ENCODE measurements at regions of chr5 and their contacts with region 1.

Region 1: GRCh38 chr5:81751009-81751835 is at the start of gene SSBP2:
- DNase-seq: peak; percentile 99
- ATAC-seq: peak; percentile 91
- H3K4me3 Mint-ChIP-seq: peak within 1 kb of the TSS; percentile 87
- H3K27ac Mint-ChIP-seq: peak within 1 kb of the TSS; percentile 91
- H3K4me1 Mint-ChIP-seq: peaks cover 22% of the 10 kb centered on the region
- H3K27me3 Mint-ChIP-seq: peaks cover 24% of the 10 kb centered on the region
- total RNA-seq, gene SSBP2: 24.3 to 26.7 TPM

Region 2: GRCh38 chr5:81134066-81134465 is 617.2 kb before region 1 on chr5:
- CTCF ChIA-PET with region 1: no interaction called
- POLR2A ChIA-PET with region 1: no interaction called
- DNase-seq: no peak
- ATAC-seq: no peak
- H3K4me3 Mint-ChIP-seq: no peak overlapping the region
- H3K27ac Mint-ChIP-seq: no peak overlapping the region
- H3K4me1 Mint-ChIP-seq: no peaks in the 10 kb centered on the region
- H3K27me3 Mint-ChIP-seq: no peaks in the 10 kb centered on the region

Region 3: GRCh38 chr5:81779125-81779915 is 28.1 kb after region 1 on chr5:
- CTCF ChIA-PET with region 1: interaction called, 5 read pairs
- POLR2A ChIA-PET with region 1: interaction called, 15 read pairs
- DNase-seq: peak; percentile 57
- ATAC-seq: peak; percentile 94
- H3K4me3 Mint-ChIP-seq: peak overlapping the region; percentile 74
- H3K27ac Mint-ChIP-seq: peak overlapping the region; percentile 85
- H3K4me1 Mint-ChIP-seq: peaks cover 25% of the 10 kb centered on the region
- H3K27me3 Mint-ChIP-seq: no peaks in the 10 kb centered on the region

Region 4: GRCh38 chr5:81838307-81838906 is 87.2 kb after region 1 on chr5:
- CTCF ChIA-PET with region 1: interaction called, 24 read pairs
- POLR2A ChIA-PET with region 1: interaction called, 3 read pairs
- DNase-seq: peak; percentile 38
- ATAC-seq: peak; percentile 74
- H3K4me3 Mint-ChIP-seq: no peak overlapping the region
- H3K27ac Mint-ChIP-seq: no peak overlapping the region
- H3K4me1 Mint-ChIP-seq: no peaks in the 10 kb centered on the region
- H3K27me3 Mint-ChIP-seq: peaks cover 3% of the 10 kb centered on the region

Measured in activated CD8-positive, alpha-beta T cell treated with anti-CD3 and anti-CD28 coated beads, Interleukin-2, amount 10 ng/mL, durations not matched to agents 7 days and 5 days (primary cell).